Testis (tissue), 5 donors: ENCODE measurements at regions of chr5 and their contacts with region 1.

Region 1: GRCh38 chr5:128844354-128844923 is 120.8 kb upstream of the SLC27A6 start:
- DNase-seq: no peak
- H3K4me3 ChIP-seq: no peak overlapping the region
- H3K27ac ChIP-seq: no peak overlapping the region
- H3K4me1 ChIP-seq: no peaks in the 10 kb centered on the region
- H3K27me3 ChIP-seq: no peaks in the 10 kb centered on the region
- CTCF ChIP-seq: peak in 1 of 3 experiments; percentile 44
- POLR2A ChIP-seq: no peak

Region 2: DNA sequence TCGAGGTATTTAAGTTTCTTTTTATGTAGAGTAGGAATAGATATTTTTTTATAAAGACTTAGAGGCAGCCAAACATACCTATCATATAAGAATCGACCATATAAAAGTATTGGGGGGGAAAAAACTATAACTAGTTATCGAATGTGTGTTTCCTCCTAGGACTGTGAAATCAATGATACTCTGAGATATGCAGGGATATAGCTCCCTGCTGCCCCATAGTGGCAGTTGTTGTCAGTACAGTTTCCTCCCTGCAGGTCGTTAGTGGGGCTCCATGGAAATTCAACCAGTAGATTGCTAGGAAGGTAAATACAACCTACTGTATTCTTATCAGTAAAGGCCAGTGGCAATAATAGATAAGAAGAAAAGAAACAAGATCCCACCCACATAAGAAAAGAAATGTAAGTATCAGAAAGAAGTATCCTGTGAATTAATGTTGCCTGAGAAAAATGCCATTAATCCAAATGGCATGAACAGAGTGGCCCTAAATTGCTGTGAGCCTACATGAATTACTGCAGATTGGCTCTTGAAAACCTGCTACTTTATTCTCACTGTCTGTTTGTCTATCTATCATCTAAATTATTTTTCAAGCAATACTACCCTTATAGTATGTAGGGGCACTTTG is 169.5 kb before region 1 on chr5:
- intact Hi-C with region 1: loop called (anchors 10 kb)
- DNase-seq: peak; percentile 60
- H3K4me3 ChIP-seq: no peak overlapping the region
- H3K27ac ChIP-seq: no peak overlapping the region
- H3K4me1 ChIP-seq: no peaks in the 10 kb centered on the region
- H3K27me3 ChIP-seq: no peaks in the 10 kb centered on the region
- CTCF ChIP-seq: peak; percentile 16 to 48 (median 19)
- POLR2A ChIP-seq: no peak